CD8-positive, alpha-beta memory T cell (primary cell): ENCODE measurements at regions of chr1 and their contacts with region 1.

Region 1: GRCh38 chr1:25608488-25609178 is 8.0 kb upstream of the MAN1C1 start:
- DNase-seq: peak; percentile 79 to 89 (median 82)
- H3K4me3 ChIP-seq: peak overlapping the region; percentile 45
- H3K4me3 Mint-ChIP-seq: peak overlapping the region in 5 of 7 donors; percentile 2 to 63 (median 25)
- H3K27ac ChIP-seq: no peak overlapping the region
- H3K27ac Mint-ChIP-seq: peak overlapping the region in 4 of 8 donors; percentile 3 to 21 (median 10)
- H3K4me1 ChIP-seq: no peaks in the 10 kb centered on the region
- H3K4me1 Mint-ChIP-seq: peaks cover 4 to 21% (median 19%) of the 10 kb centered on the region in 3 donors
- H3K27me3 ChIP-seq: no peaks in the 10 kb centered on the region
- H3K27me3 Mint-ChIP-seq: peaks cover 4 to 5% of the 10 kb centered on the region in 2 donors

Region 2: GRCh38 chr1:25774921-25775801 is 166.5 kb after region 1 on chr1:
- CTCF ChIA-PET with region 1: interaction called, 11 read pairs
- POLR2A ChIA-PET with region 1: interaction called, 3 read pairs
- DNase-seq: peak; percentile 62 to 94 (median 90)
- H3K4me3 ChIP-seq: peak overlapping the region; percentile 59
- H3K4me3 Mint-ChIP-seq: peak overlapping the region; percentile 35 to 89 (median 78)
- H3K27ac ChIP-seq: no peak overlapping the region
- H3K27ac Mint-ChIP-seq: peak overlapping the region; percentile 79 to 99 (median 92)
- H3K4me1 ChIP-seq: peaks cover 72% of the 10 kb centered on the region
- H3K4me1 Mint-ChIP-seq: peaks cover 41 to 55% (median 51%) of the 10 kb centered on the region in 3 donors
- H3K27me3 ChIP-seq: no peaks in the 10 kb centered on the region
- H3K27me3 Mint-ChIP-seq: no peaks in the 10 kb centered on the region

Region 3: DNA sequence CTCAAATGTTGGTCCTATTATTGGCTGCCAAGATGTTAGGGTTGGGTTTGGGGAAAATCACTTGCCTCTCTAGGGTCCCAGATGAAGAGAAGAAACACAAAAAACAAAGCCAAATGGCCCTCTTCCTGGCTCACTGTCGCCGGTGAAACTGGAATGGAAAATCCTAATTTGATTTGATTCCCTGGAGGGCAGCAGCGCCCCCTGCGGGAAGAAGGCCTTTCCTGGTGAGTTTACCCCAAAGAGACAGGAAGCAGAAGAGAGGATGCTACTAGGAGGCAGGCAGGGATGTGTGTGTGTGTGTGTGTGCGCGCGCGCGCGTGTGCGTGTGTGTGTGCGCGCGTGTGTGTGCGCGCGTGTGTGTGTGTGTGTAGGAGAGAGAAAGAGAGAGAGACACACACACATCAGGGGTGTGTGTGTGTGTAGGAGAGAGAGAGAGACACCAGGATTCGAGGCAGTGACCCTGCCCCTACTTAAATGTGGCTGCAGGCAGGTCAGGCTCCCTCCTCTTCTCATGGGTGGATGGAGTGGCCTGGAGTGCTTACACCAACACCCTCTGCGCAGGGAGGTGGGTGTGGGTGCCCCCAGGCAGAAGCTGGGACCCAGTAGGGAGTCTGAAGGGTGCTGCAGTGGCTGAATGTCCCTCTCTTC is 188.3 kb after region 1 on chr1:
- CTCF ChIA-PET with region 1: interaction called, 18 read pairs
- POLR2A ChIA-PET with region 1: interaction called, 3 read pairs
- DNase-seq: peak; percentile 71 to 87 (median 75)
- H3K4me3 ChIP-seq: peak overlapping the region; percentile 42
- H3K4me3 Mint-ChIP-seq: peak overlapping the region; percentile 59 to 81 (median 71)
- H3K27ac ChIP-seq: peak overlapping the region; percentile 3
- H3K27ac Mint-ChIP-seq: peak overlapping the region; percentile 73 to 95 (median 90)
- H3K4me1 ChIP-seq: peaks cover 55% of the 10 kb centered on the region
- H3K4me1 Mint-ChIP-seq: peaks cover 35 to 57% (median 41%) of the 10 kb centered on the region in 3 donors
- H3K27me3 ChIP-seq: no peaks in the 10 kb centered on the region
- H3K27me3 Mint-ChIP-seq: peaks cover 0 to 3% of the 10 kb centered on the region in 2 donors